Left cardiac atrium (tissue), 4 donors: ENCODE measurements at regions of chr1 and their contacts with region 1.

Region 1: DNA sequence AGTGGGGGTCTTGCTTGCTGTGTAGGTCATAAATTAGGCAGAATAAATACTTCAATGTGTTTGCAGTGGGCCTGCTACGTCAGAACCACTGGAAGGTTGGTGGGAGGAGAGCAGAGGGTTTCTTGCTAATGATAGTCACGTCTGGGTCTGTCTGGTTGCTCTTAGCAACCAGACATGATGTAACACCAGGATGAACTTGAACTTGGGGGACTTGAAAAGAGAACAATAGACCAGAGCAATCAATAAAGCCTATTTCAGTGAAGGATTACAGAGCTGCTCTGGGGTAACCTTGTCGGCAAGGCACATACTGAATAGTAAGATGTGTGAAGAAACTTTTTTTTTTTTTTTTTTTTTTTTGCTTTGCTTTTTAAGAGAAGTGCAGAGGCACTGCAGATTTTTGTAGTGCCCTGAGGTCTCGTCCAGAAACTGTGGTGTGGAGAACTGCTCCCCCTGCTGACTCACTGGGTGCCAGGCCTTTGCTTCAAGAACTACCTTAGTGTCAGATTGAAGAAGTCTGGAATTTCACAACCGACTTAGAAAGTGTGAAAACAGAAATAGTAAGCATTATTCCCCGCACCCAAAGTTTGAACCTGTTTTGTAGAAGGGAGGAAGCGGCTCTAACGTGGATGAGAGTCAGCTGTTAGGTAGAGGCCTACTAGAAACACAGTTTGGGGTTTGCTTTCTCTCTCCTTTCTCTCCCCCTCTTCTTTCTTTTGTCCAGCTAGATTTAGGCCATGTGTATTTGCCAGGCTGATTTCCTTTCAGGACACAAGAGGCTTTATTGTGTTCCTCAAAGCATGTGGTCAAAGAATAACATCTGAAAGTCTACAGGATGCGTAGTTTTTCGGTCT is 271.6 kb downstream of the TM2D1 start:
- DNase-seq: peak; percentile 90
- ATAC-seq: peak; percentile 67 to 88

Region 2: GRCh38 chr1:60978421-60979357 is 474.6 kb before region 1 on chr1:
- intact Hi-C with region 1: loop called in 1 of 2 experiments (anchors 10 kb)
- DNase-seq: no peak
- ATAC-seq: peak; percentile 60 to 72

Region 3: DNA sequence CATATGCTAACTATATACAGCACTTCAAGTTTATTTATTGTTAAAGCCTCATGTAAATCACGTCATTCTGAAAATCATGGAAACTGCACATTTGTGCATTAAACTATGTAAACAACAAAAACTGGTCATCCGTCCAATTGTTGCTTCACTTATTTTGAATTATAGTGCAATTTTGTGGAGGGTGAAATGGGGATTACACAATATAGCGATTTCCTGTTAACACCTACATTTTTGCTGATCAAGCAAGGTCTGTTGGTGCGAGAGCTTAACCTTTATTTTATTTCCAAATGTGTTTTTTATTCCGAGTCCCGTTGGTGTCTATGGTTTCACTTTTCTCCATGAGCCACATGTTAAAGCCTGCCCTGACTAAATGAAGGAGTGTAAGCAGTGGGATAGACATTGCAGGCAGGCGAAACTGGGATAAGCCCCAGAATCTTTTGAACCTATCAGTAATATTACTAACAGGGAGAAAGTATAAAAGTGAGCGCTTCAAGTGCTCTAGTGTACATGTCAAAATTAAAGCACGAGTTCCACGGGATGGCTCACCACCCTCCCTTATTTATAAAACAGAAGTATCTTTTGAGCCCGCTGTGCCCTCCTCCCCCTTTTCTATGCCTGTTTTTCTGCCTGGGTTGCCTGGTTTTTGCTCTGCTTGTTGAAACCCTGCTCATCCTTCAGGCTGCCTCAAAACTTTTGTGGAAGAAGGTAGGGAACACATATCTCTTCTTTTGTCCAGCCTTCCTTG is 250.3 kb before region 1 on chr1:
- intact Hi-C with region 1: loop called in 1 of 2 experiments (anchors 10 kb)
- DNase-seq: no peak
- ATAC-seq: peak; percentile 15 to 34

Region 4: DNA sequence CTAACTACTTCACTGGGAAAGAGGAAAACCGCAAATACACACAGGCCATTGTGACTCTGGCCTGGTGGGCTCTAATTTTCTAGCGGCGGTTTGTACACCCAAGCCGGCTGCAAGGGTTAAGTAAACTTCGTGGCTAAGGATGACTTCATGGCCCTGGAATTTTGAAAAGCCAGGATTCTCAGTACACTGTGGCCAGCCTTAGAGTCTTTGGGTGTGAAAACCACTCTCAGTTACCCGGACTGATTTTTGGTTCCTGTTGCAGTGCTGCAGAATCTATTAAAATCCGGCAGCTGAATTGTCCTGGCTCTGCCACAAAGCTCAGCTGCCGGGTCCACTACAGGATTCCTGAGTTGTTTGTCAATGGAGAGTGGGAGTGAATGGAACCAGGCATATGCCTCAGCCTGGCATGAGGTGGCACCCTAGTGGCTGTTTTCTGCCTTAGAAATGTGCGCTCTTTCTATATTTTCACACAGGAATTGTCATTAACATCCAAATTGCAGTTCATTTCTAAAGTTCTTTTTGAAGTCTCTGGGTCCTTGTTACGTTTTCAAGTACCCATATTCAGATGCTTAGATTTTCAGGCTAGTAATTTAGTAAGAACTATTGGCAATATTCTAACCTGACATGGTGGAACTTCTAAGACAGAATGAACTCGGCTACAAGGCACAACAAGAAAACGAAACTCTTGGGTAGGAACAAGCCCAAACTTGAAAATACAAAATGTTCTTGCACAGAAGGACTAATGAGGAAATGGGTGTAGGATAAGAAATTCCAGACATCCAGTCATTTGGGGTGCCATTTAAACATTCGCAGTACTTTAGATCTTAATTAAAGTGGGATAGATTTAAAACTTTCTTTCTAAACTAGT is 115.1 kb before region 1 on chr1:
- intact Hi-C with region 1: loop called in 1 of 2 experiments (anchors 5 kb)
- DNase-seq: peak; percentile 78
- ATAC-seq: peak; percentile 91 to 92

Region 5: DNA sequence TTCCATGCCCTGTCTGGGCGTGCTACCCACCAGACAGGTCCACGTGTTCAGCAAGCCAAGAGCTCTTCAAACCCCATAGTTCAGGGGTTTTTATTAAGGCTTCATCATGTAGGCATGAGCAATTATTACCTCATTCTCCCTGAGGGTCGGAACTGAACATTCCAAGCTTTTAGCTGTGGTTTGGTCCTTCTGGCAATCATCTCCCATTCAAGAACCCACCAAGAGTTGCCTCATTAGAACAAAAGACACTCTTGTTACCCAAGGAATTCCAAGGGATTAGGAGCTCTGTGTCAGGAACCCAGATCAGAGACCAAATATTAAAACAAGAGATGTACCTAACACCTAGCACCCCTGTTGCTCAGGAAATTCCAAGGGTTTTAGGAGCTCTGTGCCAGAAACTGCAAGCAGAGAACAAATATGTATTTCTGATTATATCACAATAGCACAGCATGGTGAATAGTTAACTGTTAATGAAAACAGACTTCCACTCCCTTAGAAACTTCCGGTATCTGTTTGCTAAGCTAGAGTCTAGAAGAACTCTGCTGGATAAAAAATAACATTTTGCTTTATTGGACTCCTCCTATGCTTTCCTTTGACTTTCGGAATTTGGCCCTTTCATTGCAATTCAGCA is 540.1 kb after region 1 on chr1:
- intact Hi-C with region 1: no loop called
- DNase-seq: no peak
- ATAC-seq: no peak